ENCODE measurements at regions of chr10 and their contacts with region 1.

Region 1: DNA sequence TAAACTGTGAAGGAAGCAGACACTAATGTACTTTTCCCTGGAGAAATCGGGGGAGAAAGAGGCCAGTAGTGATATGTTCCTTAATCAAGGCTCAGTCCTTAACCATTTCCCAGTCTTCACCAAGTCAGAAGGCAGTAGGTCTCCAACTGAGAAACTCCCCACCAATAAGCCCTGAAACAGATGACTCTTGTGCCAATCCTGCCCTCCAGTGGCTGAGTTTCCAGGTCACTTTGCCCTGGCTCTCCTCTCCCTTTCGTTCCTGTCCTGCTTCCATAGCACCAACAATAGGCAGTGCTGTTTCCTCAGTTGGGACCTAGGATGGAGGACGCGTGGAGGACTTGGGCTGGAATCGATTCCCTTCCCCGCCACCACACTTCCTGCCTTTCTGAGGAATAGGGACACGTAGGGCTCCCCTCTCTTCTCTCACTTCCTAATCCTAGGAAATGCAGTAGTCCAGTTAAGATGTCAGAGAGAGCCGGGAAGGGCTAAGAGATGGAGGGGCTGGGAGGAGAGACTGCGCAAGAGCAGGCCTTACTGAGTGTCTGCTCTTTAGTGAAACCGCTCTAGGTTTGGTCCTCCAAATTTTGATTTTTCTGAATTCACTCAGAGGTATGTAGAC is 23.4 kb downstream of the ATOH7 start:
- DNase-seq: peak in 3 of 4 experiments; percentile 25 to 62 (median 46)
- ATAC-seq: peak; percentile 84
- H3K4me3 ChIP-seq: no peak overlapping the region
- H3K27ac ChIP-seq: no peak overlapping the region
- H3K4me1 ChIP-seq: no peaks in the 10 kb centered on the region
- H3K27me3 ChIP-seq: peaks cover 30 to 32% of the 10 kb centered on the region in 2 experiments
- CTCF ChIP-seq: peak; percentile 67 to 73 (median 70)
- EP300 ChIP-seq: no peak
- POLR2A ChIP-seq: no peak
- RAD21 ChIP-seq: peak; percentile 56 to 83

Region 2: GRCh38 chr10:67788025-67788886 is 420.3 kb before region 1 on chr10:
- CTCF ChIA-PET with region 1: interaction called, 9 read pairs
- POLR2A ChIA-PET with region 1: interaction called, 3 read pairs
- in situ Hi-C with region 1: no loop called
- intact Hi-C with region 1: loop called (anchors 1 kb)
- DNase-seq: peak; percentile 84 to 90 (median 88)
- ATAC-seq: peak; percentile 89
- H3K4me3 ChIP-seq: no peak overlapping the region
- H3K27ac ChIP-seq: no peak overlapping the region
- H3K4me1 ChIP-seq: peaks cover 0 to 14% of the 10 kb centered on the region in 2 experiments; a peak in 4 of 5 replicates
- H3K27me3 ChIP-seq: no peaks in the 10 kb centered on the region
- CTCF ChIP-seq: peak; percentile 87 to 95 (median 94)
- EP300 ChIP-seq: no peak
- POLR2A ChIP-seq: no peak
- RAD21 ChIP-seq: peak; percentile 95 to 98

Region 3: DNA sequence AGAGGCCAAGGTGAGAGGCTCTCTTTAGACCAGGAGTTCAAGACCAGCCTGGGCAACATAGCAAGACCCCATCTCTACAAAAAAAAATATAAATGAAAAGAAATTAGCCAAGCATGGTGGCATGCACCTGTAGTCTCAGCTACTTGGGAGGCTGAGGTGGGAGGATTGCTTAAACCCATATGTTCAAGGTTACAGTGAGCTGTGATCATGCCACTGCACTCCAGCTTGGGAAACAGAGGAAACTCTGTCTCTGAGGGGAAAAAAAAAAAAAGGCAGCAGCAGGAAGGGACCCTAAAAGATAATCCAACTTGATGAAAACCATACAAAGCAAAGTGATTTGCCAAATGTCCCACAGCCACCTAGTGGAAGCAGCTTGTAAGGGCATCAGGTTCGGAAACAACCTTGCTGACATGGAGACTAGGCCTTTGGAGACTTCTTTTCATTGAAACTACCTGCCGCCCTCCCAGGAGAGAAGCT is 139.8 kb after region 1 on chr10:
- CTCF ChIA-PET with region 1: no interaction called
- POLR2A ChIA-PET with region 1: no interaction called
- in situ Hi-C with region 1: no loop called
- intact Hi-C with region 1: loop called (anchors 2 kb)
- DNase-seq: peak; percentile 56 to 73 (median 56)
- ATAC-seq: peak; percentile 80
- H3K4me3 ChIP-seq: no peak overlapping the region
- H3K27ac ChIP-seq: no peak overlapping the region
- H3K4me1 ChIP-seq: no peaks in the 10 kb centered on the region
- H3K27me3 ChIP-seq: no peaks in the 10 kb centered on the region
- CTCF ChIP-seq: peak; percentile 74 to 82 (median 80)
- EP300 ChIP-seq: no peak
- POLR2A ChIP-seq: no peak
- RAD21 ChIP-seq: peak in 1 of 2 experiments; percentile 57; a peak in 3 of 4 replicates

Region 4: DNA sequence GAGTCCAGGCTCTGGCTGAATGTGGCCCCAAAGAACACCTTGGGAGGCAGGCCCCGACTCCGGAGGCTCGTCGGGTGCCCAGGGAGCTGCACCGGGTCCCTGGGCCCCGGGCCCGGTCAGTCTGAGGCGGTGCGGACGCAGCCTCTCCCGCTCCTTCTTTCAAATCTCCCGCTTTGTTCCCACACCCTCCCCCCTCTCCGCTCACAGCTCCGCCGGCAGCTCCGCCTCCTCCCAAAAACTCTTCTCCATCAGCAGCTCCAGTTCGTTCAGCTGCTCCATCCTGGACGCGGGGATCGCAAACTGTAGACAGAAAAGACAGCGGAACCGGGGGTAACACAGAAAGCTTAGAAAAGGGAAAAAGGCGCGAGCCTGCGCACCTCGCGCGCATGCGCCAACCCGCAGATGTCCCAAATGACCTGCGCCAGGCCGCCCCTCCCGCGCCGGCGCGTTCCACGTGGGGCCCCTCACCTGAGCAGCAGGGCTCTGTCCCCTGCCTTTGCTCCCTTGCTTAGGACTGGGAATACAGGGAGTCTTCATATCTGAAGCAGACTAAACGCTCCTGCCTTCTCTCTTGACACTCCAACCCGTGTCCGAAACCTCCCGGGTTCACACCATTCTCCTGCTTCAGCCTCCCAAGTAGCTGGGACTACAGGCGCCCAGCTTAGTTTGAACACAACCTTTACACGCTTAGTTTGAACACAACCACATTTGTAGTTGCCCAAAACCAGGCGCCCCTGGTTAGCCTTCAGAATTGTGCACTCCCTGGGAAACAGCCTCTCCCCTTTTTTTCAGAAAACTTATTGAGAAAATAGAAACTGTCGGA is 263.3 kb after region 1 on chr10 and contains the start of gene DNA2:
- CTCF ChIA-PET with region 1: no interaction called
- POLR2A ChIA-PET with region 1: no interaction called
- in situ Hi-C with region 1: no loop called
- intact Hi-C with region 1: no loop called
- DNase-seq: peak; percentile 94 to 97 (median 96)
- ATAC-seq: peak; percentile 90
- H3K4me3 ChIP-seq: peak within 1 kb of the TSS; percentile 60
- H3K27ac ChIP-seq: peak within 1 kb of the TSS; percentile 89
- H3K4me1 ChIP-seq: peaks cover 9 to 11% of the 10 kb centered on the region in 2 experiments; a peak in 4 of 5 replicates
- H3K27me3 ChIP-seq: no peaks in the 10 kb centered on the region
- CTCF ChIP-seq: no peak
- EP300 ChIP-seq: no peak
- POLR2A ChIP-seq: peak; percentile 90
- RAD21 ChIP-seq: peak; percentile 1 to 15; a peak in 1 of 4 replicates
- polyA plus RNA-seq, gene DNA2: 24.7 to 32.7 TPM

Measured in K562 (cell line).